Caco-2 (cell line): ENCODE measurements at regions of chr1 and their contacts with region 1.

Region 1: GRCh38 chr1:113072757-113073478 is at the start of gene LRIG2:
- DNase-seq: peak; percentile 96 to 98
- H3K4me3 ChIP-seq: peak within 1 kb of the TSS; percentile 92
- H3K4me3 Mint-ChIP-seq: peak within 1 kb of the TSS; percentile 85
- H3K27ac Mint-ChIP-seq: peak within 1 kb of the TSS; percentile 80
- H3K4me1 ChIP-seq: peaks cover 5% of the 10 kb centered on the region
- H3K4me1 Mint-ChIP-seq: no peaks in the 10 kb centered on the region
- H3K27me3 ChIP-seq: no peaks in the 10 kb centered on the region
- H3K27me3 Mint-ChIP-seq: no peaks in the 10 kb centered on the region
- CTCF ChIP-seq: peak; percentile 45 to 56
- total RNA-seq, gene LRIG2: 10.7 and 14.4 TPM in 2 replicates

Region 2: GRCh38 chr1:112715264-112716053 is 357.5 kb before region 1 on chr1 and contains the start of gene PPM1J:
- CTCF ChIA-PET with region 1: interaction called, 24 read pairs
- POLR2A ChIA-PET with region 1: no interaction called
- intact Hi-C with region 1: loop called (anchors 2 kb)
- DNase-seq: peak; percentile 96 to 97
- H3K4me3 ChIP-seq: peak within 1 kb of the TSS; percentile 50
- H3K4me3 Mint-ChIP-seq: peak within 1 kb of the TSS; percentile 87
- H3K27ac Mint-ChIP-seq: no peak within 1 kb of the TSS
- H3K4me1 ChIP-seq: peaks cover 8% of the 10 kb centered on the region; the same call in 1 of the 2 replicates
- H3K4me1 Mint-ChIP-seq: peaks cover 11% of the 10 kb centered on the region
- H3K27me3 ChIP-seq: no peaks in the 10 kb centered on the region
- H3K27me3 Mint-ChIP-seq: no peaks in the 10 kb centered on the region
- CTCF ChIP-seq: no peak
- total RNA-seq, gene PPM1J: 1.1 and 1.5 TPM in 2 replicates

Region 3: GRCh38 chr1:112872551-112872962 is 200.4 kb before region 1 on chr1:
- CTCF ChIA-PET with region 1: interaction called, 3 read pairs
- POLR2A ChIA-PET with region 1: no interaction called
- intact Hi-C with region 1: loop called (anchors 2 kb)
- DNase-seq: peak; percentile 25 to 65
- H3K4me3 ChIP-seq: no peak overlapping the region
- H3K4me3 Mint-ChIP-seq: peak overlapping the region; percentile 29
- H3K27ac Mint-ChIP-seq: peak overlapping the region; percentile 81
- H3K4me1 ChIP-seq: peaks cover 59% of the 10 kb centered on the region
- H3K4me1 Mint-ChIP-seq: peaks cover 37% of the 10 kb centered on the region
- H3K27me3 ChIP-seq: no peaks in the 10 kb centered on the region
- H3K27me3 Mint-ChIP-seq: no peaks in the 10 kb centered on the region
- CTCF ChIP-seq: no peak

Region 4: GRCh38 chr1:112882271-112882744 is 190.6 kb before region 1 on chr1:
- CTCF ChIA-PET with region 1: interaction called, 3 read pairs
- POLR2A ChIA-PET with region 1: no interaction called
- intact Hi-C with region 1: loop called (anchors 2 kb)
- DNase-seq: no peak
- H3K4me3 ChIP-seq: no peak overlapping the region
- H3K4me3 Mint-ChIP-seq: no peak overlapping the region
- H3K27ac Mint-ChIP-seq: peak overlapping the region; percentile 40
- H3K4me1 ChIP-seq: peaks cover 6% of the 10 kb centered on the region; the same call in 1 of the 2 replicates
- H3K4me1 Mint-ChIP-seq: peaks cover 11% of the 10 kb centered on the region
- H3K27me3 ChIP-seq: no peaks in the 10 kb centered on the region
- H3K27me3 Mint-ChIP-seq: no peaks in the 10 kb centered on the region
- CTCF ChIP-seq: no peak

Region 5: GRCh38 chr1:113012149-113012548 is 60.8 kb before region 1 on chr1:
- CTCF ChIA-PET with region 1: no interaction called
- POLR2A ChIA-PET with region 1: no interaction called
- intact Hi-C with region 1: no loop called
- DNase-seq: no peak
- H3K4me3 ChIP-seq: no peak overlapping the region
- H3K4me3 Mint-ChIP-seq: no peak overlapping the region
- H3K27ac Mint-ChIP-seq: no peak overlapping the region
- H3K4me1 ChIP-seq: peaks cover 10% of the 10 kb centered on the region
- H3K4me1 Mint-ChIP-seq: no peaks in the 10 kb centered on the region
- H3K27me3 ChIP-seq: no peaks in the 10 kb centered on the region
- H3K27me3 Mint-ChIP-seq: no peaks in the 10 kb centered on the region
- CTCF ChIP-seq: no peak

Region 6: DNA sequence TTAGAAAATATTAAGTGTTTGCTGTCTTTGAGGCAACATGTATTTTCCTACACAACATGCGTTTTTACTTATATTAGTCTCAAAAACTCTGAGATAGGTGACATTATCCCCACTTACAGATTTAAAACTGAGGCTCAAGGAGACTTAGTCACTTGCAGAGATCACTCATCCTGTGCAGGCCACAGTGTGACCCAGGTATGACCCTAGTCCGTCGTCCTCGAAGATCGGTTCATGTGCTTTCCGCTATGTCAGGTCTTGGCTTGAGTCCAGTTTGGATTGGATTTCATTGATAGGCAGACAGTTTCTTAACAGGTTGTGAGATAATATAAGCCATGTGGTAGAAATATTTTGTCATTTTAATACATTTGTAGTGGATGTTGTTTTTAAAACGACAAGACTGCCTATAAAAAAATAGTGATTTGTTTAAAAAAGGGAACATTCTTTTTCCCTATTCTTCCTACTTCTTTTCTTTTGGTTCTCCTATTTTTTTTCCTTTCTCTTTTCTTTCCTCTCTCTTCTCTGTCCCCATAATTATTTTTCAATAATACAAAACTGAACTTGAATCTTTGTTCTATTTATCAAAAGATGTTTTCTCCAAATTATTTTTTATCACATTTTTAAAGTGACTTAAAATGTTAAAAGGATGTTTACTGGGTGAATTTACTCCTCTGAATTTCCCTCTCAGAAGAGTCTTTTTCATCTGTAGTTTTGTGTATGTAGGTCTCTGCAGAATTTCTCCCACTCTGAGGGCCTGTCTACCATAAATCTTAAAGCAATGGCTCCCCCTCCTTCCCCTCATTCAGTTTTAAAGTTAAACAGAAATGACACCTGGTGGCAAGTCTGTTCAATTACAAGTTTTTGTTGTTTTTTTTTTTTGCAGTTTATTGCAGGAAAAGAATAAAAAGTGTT is 604.6 kb after region 1 on chr1:
- CTCF ChIA-PET with region 1: no interaction called
- POLR2A ChIA-PET with region 1: no interaction called
- intact Hi-C with region 1: loop called (anchors 5 kb)
- DNase-seq: peak in 1 of 2 experiments; percentile 39
- H3K4me3 ChIP-seq: no peak overlapping the region
- H3K4me3 Mint-ChIP-seq: no peak overlapping the region
- H3K27ac Mint-ChIP-seq: no peak overlapping the region
- H3K4me1 ChIP-seq: 0 out of 2 replicates have a peak, but pooled peaks cover 10% of the 10 kb centered on the region
- H3K4me1 Mint-ChIP-seq: peaks cover 23% of the 10 kb centered on the region
- H3K27me3 ChIP-seq: no peaks in the 10 kb centered on the region
- H3K27me3 Mint-ChIP-seq: no peaks in the 10 kb centered on the region
- CTCF ChIP-seq: peak; percentile 26 to 28